ENCODE measurements at regions of chr1 and their contacts with region 1.

Region 1: GRCh38 chr1:16055613-16056520 is 12.3 kb downstream of the CLCNKB start:
- DNase-seq: peak; percentile 72 to 97
- H3K4me3 ChIP-seq: no peak overlapping the region
- CTCF ChIP-seq: peak in 1 of 3 donors; percentile 75
- POLR2A ChIP-seq: no peak

Region 2: GRCh38 chr1:15918962-15919715 is 136.7 kb before region 1 on chr1:
- intact Hi-C with region 1: no loop called
- DNase-seq: no peak
- H3K4me3 ChIP-seq: no peak overlapping the region
- CTCF ChIP-seq: no peak
- POLR2A ChIP-seq: no peak

Region 3: GRCh38 chr1:16032388-16033103 is 23.3 kb before region 1 on chr1:
- intact Hi-C with region 1: loop called (anchors 2 kb)
- DNase-seq: peak; percentile 79 to 95
- H3K4me3 ChIP-seq: no peak overlapping the region
- CTCF ChIP-seq: peak in 1 of 3 donors; percentile 76
- POLR2A ChIP-seq: no peak

Region 4: GRCh38 chr1:16122916-16123315 is 67.0 kb after region 1 on chr1:
- intact Hi-C with region 1: no loop called
- DNase-seq: peak in 1 of 2 donors; percentile 48
- H3K4me3 ChIP-seq: no peak overlapping the region
- CTCF ChIP-seq: no peak
- POLR2A ChIP-seq: no peak

Region 5: DNA sequence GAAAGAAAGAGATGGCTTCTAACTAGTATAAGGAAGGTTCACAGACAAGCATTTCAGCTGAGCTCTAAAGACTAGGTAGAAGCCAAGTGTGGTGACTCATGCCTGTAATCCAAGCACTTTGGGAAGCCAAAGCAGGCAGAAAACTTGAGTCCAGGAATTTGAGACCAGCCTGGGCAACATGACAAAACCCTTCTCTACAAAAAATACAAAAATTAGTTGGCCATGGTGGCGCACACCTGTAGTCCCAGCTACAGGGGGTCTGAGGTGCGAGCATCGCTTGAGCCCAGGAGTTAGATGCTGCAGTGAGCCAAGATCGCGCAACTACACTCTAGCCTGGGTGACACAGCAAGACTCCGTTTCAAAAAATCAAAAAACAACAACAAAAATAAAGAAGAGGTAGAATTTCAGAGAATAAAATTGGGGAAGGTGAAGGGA is 268.6 kb after region 1 on chr1:
- intact Hi-C with region 1: no loop called
- DNase-seq: peak in 1 of 2 donors; percentile 26
- H3K4me3 ChIP-seq: no peak overlapping the region
- CTCF ChIP-seq: no peak
- POLR2A ChIP-seq: no peak